ENCODE measurements at regions of chr3 and their contacts with region 1.

Region 1: DNA sequence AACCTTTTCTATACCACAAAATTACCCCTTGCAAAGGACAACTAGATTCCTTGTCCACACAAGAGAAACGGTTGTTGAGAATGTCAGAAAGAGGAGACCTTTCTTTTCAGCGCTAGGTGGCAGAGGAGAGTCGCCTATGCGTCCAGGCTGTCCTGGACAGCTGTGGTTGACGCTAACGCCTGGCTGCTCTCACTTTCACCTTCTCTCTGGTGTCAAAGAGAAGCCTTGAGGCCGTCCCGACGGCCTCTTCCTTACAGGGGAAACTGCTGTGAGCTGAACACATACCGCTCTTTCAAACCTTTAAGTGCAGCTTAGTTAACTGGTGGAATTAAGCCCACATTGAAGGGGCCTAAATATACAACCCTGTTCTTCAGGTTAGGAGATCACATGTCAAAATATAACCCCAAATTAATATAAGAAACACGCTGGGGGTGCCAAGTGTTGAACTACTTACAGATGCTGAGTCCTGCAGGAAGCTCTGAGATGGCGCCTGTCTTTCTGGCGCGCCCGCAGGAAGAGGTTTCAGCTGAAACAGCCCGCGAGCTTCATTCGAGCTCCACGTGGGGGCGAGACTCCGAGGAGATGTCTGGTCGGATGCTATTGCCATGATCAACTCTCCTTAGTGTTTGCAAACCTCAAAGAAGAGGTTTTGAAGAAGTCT is 26.1 kb upstream of the KBTBD8 start:
- DNase-seq: peak; percentile 24 to 59 (median 48)
- ATAC-seq: peak; percentile 93
- H3K4me3 ChIP-seq: peak overlapping the region; percentile 69
- H3K4me3 Mint-ChIP-seq: peak overlapping the region; percentile 75 to 94 (median 88)
- H3K27ac ChIP-seq: peak overlapping the region; percentile 54
- H3K27ac Mint-ChIP-seq: peak overlapping the region; percentile 24 to 95 (median 68)
- H3K4me1 ChIP-seq: peaks cover 5 to 7% of the 10 kb centered on the region in 2 donors
- H3K4me1 Mint-ChIP-seq: peaks cover 0 to 20% (median 12%) of the 10 kb centered on the region in 7 donors
- H3K27me3 ChIP-seq: no peaks in the 10 kb centered on the region
- H3K27me3 Mint-ChIP-seq: peaks cover 0 to 10% (median 0%) of the 10 kb centered on the region in 5 donors

Region 2: DNA sequence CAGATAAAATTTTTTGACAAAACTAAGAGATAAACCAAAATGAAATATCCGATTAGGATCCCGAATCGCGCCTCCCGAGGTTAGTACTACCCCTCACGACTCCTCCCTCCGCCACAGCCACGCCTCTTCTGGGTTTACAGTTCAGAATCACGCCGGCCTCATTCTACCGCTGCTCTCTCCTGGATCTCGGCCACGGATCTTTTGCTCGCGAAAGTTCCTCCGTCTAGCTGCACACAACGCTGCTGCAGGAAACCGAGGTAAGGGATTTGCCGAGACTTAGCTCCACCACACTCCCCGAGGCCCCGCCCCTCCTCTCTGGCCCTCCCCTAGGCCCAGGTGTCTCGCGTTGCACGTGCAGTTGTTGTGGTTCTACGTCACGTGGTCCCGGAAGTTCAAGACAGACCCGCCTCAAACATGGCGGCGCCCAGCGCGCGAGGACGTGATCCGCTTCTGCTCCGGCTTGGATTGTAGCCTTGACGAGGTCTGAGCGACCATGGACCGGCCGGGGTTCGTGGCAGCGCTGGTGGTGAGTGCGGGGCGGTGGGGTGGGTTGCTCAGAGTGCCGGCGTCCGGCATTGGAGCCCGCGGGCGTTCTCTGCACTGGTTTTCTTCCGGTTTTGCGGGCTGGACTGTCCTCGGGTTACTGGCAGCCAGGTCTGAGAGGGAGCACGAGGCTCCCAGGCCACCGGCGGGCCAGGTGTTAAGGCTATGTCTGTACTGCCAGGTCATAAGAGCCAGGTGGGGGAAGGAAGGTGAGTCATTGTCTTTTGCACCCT is 751.2 kb before region 1 on chr3 and contains the start of gene SLC25A26:
- CTCF ChIA-PET with region 1: no interaction called
- POLR2A ChIA-PET with region 1: no interaction called
- intact Hi-C with region 1: loop called in 1 of 2 experiments (anchors 1 kb)
- DNase-seq: peak; percentile 90 to 99 (median 97)
- ATAC-seq: peak; percentile 99
- H3K4me3 ChIP-seq: peak within 1 kb of the TSS; percentile 70
- H3K4me3 Mint-ChIP-seq: peak within 1 kb of the TSS; percentile 91 to 99 (median 96)
- H3K27ac ChIP-seq: peak within 1 kb of the TSS; percentile 90
- H3K27ac Mint-ChIP-seq: peak within 1 kb of the TSS; percentile 85 to 98 (median 95)
- H3K4me1 ChIP-seq: peaks cover 7% of the 10 kb centered on the region in 2 donors
- H3K4me1 Mint-ChIP-seq: peaks cover 15 to 55% (median 44%) of the 10 kb centered on the region in 7 donors
- H3K27me3 ChIP-seq: no peaks in the 10 kb centered on the region
- H3K27me3 Mint-ChIP-seq: peaks cover 0 to 2% (median 0%) of the 10 kb centered on the region in 5 donors
- total RNA-seq, gene SLC25A26: 14.1 to 25.5 (median 17.9) TPM

Region 3: GRCh38 chr3:66998113-66998903 is 26.3 kb after region 1 on chr3 and contains the start of gene KBTBD8:
- CTCF ChIA-PET with region 1: interaction called, 14 read pairs
- POLR2A ChIA-PET with region 1: interaction called, 12 read pairs
- intact Hi-C with region 1: loop called (anchors 1 kb)
- DNase-seq: peak; percentile 87 to 99 (median 98)
- ATAC-seq: peak; percentile 97
- H3K4me3 ChIP-seq: peak within 1 kb of the TSS; percentile 69
- H3K4me3 Mint-ChIP-seq: peak within 1 kb of the TSS; percentile 85 to 99 (median 96)
- H3K27ac ChIP-seq: peak within 1 kb of the TSS; percentile 75
- H3K27ac Mint-ChIP-seq: peak within 1 kb of the TSS; percentile 68 to 96 (median 93)
- H3K4me1 ChIP-seq: peaks cover 7 to 19% of the 10 kb centered on the region in 2 donors
- H3K4me1 Mint-ChIP-seq: peaks cover 4 to 39% (median 27%) of the 10 kb centered on the region in 7 donors
- H3K27me3 ChIP-seq: no peaks in the 10 kb centered on the region
- H3K27me3 Mint-ChIP-seq: peaks cover 10 to 33% (median 27%) of the 10 kb centered on the region in 5 donors
- total RNA-seq, gene KBTBD8: 4.5 to 14.6 (median 9.5) TPM

Region 4: GRCh38 chr3:67357610-67358458 is 385.8 kb after region 1 on chr3:
- CTCF ChIA-PET with region 1: no interaction called
- POLR2A ChIA-PET with region 1: no interaction called
- intact Hi-C with region 1: loop called in 1 of 2 experiments (anchors 2 kb)
- DNase-seq: no peak
- ATAC-seq: no peak
- H3K4me3 ChIP-seq: no peak overlapping the region
- H3K4me3 Mint-ChIP-seq: peak overlapping the region in 3 of 10 donors; percentile 36 to 49 (median 42)
- H3K27ac ChIP-seq: no peak overlapping the region
- H3K27ac Mint-ChIP-seq: no peak overlapping the region
- H3K4me1 ChIP-seq: peaks cover 0 to 3% of the 10 kb centered on the region in 2 donors
- H3K4me1 Mint-ChIP-seq: peaks cover 0 to 29% (median 6%) of the 10 kb centered on the region in 7 donors
- H3K27me3 ChIP-seq: no peaks in the 10 kb centered on the region
- H3K27me3 Mint-ChIP-seq: no peaks in the 10 kb centered on the region

Region 5: GRCh38 chr3:68876112-68876713 is 1904.2 kb after region 1 on chr3:
- CTCF ChIA-PET with region 1: interaction called, 6 read pairs
- POLR2A ChIA-PET with region 1: no interaction called
- intact Hi-C with region 1: loop called (anchors 1 kb)
- DNase-seq: peak in 7 of 9 donors; percentile 30 to 63 (median 51)
- ATAC-seq: peak; percentile 69
- H3K4me3 ChIP-seq: no peak overlapping the region
- H3K4me3 Mint-ChIP-seq: no peak overlapping the region
- H3K27ac ChIP-seq: no peak overlapping the region
- H3K27ac Mint-ChIP-seq: no peak overlapping the region
- H3K4me1 ChIP-seq: no peaks in the 10 kb centered on the region
- H3K4me1 Mint-ChIP-seq: no peaks in the 10 kb centered on the region
- H3K27me3 ChIP-seq: no peaks in the 10 kb centered on the region
- H3K27me3 Mint-ChIP-seq: peaks cover 5 to 28% (median 25%) of the 10 kb centered on the region in 5 donors

Measured in naive thymus-derived CD4-positive, alpha-beta T cell (primary cell).